Upper lobe of right lung (tissue), 1 donor: ENCODE measurements at regions of chr14 and their contacts with region 1.

Region 1: GRCh38 chr14:55160989-55161388 is 30.4 kb downstream of the DLGAP5 start:
- DNase-seq: no peak
- ATAC-seq: peak; percentile 84
- H3K4me3 ChIP-seq: no peak overlapping the region
- H3K27ac ChIP-seq: no peak overlapping the region
- H3K4me1 ChIP-seq: no peaks in the 10 kb centered on the region
- H3K27me3 ChIP-seq: no peaks in the 10 kb centered on the region
- CTCF ChIP-seq: peak; percentile 75

Region 2: DNA sequence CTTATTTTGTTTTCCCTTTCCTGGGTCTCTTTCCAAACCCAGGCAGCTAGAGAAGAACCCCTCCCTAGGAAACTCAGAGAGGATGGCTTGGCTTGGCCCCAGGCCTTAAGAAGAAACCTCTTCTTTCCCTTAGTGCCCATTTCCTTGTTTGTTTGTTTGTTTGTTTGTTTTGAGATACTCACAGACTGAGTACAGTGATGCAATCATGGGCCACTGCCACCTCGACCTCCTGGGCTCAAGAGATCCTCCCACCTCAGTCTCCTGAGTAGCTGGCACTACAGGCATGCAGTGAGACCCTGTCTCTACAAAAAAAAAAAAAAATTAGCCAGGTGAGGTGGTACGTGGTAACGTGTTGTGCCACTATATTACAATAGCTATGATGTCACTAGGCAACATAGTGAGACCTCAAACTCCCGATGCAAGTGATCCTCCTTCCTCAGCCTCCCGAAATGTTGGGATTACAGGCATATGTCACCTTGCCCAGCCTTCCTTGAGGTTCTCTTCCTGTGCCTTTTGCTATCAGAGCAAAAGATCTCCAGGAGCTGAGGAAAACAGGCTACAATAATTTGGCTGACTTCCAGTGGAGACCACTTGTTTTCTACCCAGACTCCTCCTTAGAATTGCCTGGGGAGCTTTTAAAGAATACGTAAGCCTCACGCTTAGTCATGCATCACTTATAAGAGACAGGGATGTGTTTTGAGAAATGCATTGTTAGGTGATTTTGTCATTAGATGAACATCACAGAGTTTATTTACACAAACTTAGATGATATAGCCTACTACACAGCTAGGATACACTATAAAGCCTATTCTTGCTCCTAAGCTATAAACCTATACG is 66.5 kb before region 1 on chr14:
- intact Hi-C with region 1: loop called (anchors 5 kb)
- DNase-seq: no peak
- ATAC-seq: no peak
- H3K4me3 ChIP-seq: no peak overlapping the region
- H3K27ac ChIP-seq: no peak overlapping the region
- H3K4me1 ChIP-seq: peaks cover 16% of the 10 kb centered on the region
- H3K27me3 ChIP-seq: no peaks in the 10 kb centered on the region
- CTCF ChIP-seq: no peak